Ascending aorta (tissue), 2 donors: ENCODE measurements at regions of chr6 and their contacts with region 1.

Region 1: DNA sequence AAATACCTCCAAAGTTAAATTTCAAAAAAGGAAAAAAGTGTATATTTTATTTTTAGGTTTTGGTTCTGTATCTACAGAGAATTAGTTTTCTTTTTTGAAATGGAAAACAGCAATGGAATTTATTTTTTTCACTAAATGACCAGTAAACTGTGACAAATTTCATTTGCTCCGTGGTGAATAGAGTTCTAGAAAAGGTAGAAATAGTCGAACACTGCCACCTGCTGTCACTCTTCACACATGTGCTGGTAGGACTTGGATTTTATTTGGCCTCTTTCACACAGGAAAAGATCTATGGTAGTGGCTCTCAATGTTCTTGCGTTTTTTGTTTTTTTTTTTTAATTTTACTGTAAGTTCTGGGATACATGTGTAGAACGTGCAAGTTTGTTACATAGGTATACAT is 312.5 kb downstream of the EYA4 start:
- DNase-seq: no peak
- H3K4me3 ChIP-seq: no peak overlapping the region
- H3K27ac ChIP-seq: no peak overlapping the region
- H3K4me1 ChIP-seq: no peaks in the 10 kb centered on the region
- H3K27me3 ChIP-seq: no peaks in the 10 kb centered on the region
- CTCF ChIP-seq: peak; percentile 13 to 64 (median 57)

Region 2: DNA sequence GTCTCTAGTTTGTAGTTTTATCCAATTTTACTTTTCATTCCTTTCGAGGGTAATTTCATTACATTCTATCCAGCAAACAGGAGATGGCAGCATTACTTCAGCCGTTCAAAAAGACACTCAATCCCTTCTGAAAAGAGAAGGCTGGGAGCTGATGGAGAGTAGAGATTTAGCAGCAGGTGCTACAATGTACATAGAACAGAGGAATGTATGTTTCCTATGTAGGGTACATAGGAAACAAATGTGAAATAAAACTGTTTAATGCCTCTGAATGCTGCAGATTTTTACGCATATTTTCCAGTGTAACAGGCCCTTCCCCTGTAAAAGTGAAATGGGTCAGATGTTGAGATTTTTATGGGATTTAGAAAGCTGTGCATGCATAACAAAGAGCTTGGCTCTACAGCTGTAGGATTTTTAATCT is 723.3 kb before region 1 on chr6:
- intact Hi-C with region 1: loop called (anchors 2 kb)
- DNase-seq: no peak
- H3K4me3 ChIP-seq: no peak overlapping the region
- H3K27ac ChIP-seq: no peak overlapping the region
- H3K4me1 ChIP-seq: no peaks in the 10 kb centered on the region
- H3K27me3 ChIP-seq: no peaks in the 10 kb centered on the region
- CTCF ChIP-seq: peak in 1 of 3 experiments; percentile 33

Region 3: DNA sequence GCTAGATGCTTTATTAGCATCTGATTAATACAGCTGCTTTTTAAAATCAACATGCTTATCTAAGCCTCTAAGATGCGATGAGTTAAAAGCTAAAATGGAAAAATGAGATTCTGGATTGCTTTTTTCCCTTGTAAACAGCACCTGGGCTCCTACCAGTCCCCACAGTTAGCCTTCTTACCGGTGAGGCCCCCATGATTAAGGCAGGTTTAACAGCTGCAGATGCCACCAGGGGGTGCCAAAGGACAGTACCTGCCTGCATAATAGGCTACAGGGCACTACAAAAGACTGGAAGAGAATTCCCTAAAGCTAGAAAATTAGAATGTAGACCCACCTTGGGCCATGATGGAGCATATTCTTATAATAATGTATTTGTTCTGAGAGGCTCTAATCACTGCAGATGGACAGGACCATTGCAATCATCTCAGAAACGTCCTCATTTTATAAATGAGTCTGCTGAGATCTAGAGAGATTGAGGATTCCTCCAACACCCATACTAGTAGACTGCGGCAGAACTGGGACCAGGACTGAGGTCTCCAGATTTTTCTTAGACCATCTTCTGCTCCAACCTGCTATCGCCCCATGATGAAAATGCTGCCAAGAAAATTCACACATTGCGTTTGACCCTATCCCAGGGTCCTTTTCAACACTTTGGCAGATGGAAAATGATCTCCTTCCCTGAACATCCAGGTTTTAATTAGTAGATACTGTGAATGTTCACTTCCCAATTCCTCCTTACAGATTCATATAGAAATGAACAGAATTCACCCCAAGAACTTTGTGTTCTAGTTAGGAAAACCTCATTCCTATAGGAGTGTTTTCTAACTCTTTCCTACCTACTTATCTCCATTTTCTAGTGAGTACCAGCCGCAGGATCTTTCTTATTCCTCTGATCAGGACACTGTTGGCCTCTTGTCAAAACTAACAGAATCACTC is 590.5 kb before region 1 on chr6:
- intact Hi-C with region 1: loop called (anchors 5 kb)
- DNase-seq: peak in 1 of 2 donors; percentile 65
- H3K4me3 ChIP-seq: no peak overlapping the region
- H3K27ac ChIP-seq: no peak overlapping the region
- H3K4me1 ChIP-seq: no peaks in the 10 kb centered on the region
- H3K27me3 ChIP-seq: no peaks in the 10 kb centered on the region
- CTCF ChIP-seq: peak; percentile 26 to 65 (median 38)

Region 4: GRCh38 chr6:133184798-133185372 is 368.8 kb before region 1 on chr6:
- intact Hi-C with region 1: loop called (anchors 1 kb)
- DNase-seq: no peak
- H3K4me3 ChIP-seq: no peak overlapping the region
- H3K27ac ChIP-seq: no peak overlapping the region
- H3K4me1 ChIP-seq: no peaks in the 10 kb centered on the region
- H3K27me3 ChIP-seq: no peaks in the 10 kb centered on the region
- CTCF ChIP-seq: peak; percentile 15 to 59 (median 20)

Region 5: DNA sequence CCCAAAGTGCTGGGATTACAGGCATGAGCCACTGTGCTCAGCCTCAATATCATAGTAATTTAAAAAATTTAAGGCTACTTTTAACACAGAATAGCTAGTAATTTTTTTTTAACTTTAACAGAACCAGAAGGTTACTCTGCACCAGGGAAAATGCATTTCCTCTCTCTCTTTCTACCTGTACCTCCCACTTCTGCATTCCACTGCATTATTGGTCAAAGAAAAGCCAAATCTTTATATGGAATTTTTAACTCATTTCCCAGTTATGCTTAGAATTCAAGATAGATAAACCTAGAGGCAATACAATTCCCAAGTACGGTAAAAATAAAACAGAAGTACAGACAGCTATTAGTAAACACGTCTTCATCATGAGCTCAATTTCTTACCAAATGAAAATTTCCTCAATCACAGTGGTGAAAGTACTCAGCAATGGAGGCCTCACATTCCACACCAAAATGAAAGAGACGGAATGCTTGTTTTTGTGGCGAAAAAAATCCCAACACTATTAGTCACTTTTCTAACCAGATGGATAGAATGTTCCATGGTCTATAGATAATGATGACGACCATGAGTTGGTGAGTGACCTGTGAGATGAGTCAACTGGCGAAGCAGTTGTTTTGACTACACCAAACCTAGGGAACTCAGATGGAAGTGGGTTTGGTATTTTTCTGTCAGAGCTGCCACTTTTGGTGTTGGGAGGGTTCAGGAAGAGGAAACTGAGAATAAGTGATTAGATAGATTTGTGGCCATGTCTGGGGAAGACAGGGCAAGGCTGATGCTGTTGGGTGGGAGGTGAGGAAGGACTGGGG is 869.0 kb after region 1 on chr6:
- intact Hi-C with region 1: no loop called
- DNase-seq: no peak
- H3K4me3 ChIP-seq: no peak overlapping the region
- H3K27ac ChIP-seq: no peak overlapping the region
- H3K4me1 ChIP-seq: peaks cover 0 to 3% of the 10 kb centered on the region in 2 donors
- H3K27me3 ChIP-seq: no peaks in the 10 kb centered on the region
- CTCF ChIP-seq: no peak